ENCODE measurements at regions of chr20 and their contacts with region 1.

Region 1: GRCh38 chr20:54649511-54649962 is 174.1 kb downstream of the DOK5 start:
- DNase-seq: peak; percentile 74 to 82 (median 75)
- ATAC-seq: peak; percentile 89 to 93 (median 91)
- H3K4me3 ChIP-seq: no peak overlapping the region
- H3K27ac ChIP-seq: no peak overlapping the region
- H3K4me1 ChIP-seq: peaks cover 0 to 10% (median 4%) of the 10 kb centered on the region in 4 donors
- H3K27me3 ChIP-seq: no peaks in the 10 kb centered on the region
- CTCF ChIP-seq: peak; percentile 55 to 87 (median 83)
- POLR2A ChIP-seq: no peak

Region 2: GRCh38 chr20:54212226-54212625 is 437.3 kb before region 1 on chr20:
- intact Hi-C with region 1: loop called in 1 of 2 experiments (anchors 5 kb)
- DNase-seq: no peak
- ATAC-seq: no peak
- H3K4me3 ChIP-seq: no peak overlapping the region
- H3K27ac ChIP-seq: no peak overlapping the region
- H3K4me1 ChIP-seq: peaks cover 0 to 14% (median 5%) of the 10 kb centered on the region in 4 donors
- H3K27me3 ChIP-seq: no peaks in the 10 kb centered on the region
- CTCF ChIP-seq: no peak
- POLR2A ChIP-seq: no peak

Region 3: GRCh38 chr20:54219751-54220426 is 429.6 kb before region 1 on chr20:
- intact Hi-C with region 1: loop called in 1 of 2 experiments (anchors 10 kb)
- DNase-seq: no peak
- ATAC-seq: peak in 2 of 4 donors; percentile 32 to 46
- H3K4me3 ChIP-seq: no peak overlapping the region
- H3K27ac ChIP-seq: no peak overlapping the region
- H3K4me1 ChIP-seq: peaks cover 0 to 22% (median 8%) of the 10 kb centered on the region in 4 donors
- H3K27me3 ChIP-seq: no peaks in the 10 kb centered on the region
- CTCF ChIP-seq: peak; percentile 51 to 66 (median 58)
- POLR2A ChIP-seq: no peak

Region 4: DNA sequence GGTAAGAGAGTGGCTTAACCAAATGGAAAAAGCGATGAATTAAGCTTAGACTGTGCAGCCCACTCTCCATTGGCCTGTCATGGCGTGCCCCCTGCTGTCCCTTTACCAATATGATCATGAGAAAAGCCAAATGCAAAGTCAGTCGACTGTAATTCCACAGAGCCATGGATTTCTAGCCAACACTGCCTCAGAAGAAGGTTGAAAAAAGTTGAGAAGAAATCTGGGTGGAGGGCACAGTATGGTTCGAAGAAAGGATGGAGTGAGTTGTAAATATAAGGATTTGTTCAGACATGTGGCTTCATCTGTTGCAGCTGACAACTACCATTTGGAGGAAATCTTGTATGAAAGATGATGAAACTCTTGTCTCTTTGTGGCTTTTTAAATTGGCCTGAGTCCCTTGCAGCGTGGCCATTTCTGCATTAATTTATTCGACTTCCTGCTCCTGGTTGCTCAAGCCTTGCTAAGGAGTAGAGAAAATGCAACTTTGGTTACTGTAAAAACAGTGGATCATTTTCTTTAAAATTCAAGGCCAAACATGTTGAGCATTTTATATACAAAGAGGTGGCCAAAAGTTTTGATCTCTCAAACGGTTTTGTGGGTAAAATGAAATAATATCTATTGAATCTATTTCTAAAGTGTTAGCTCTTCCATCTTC is 77.4 kb after region 1 on chr20:
- intact Hi-C with region 1: no loop called
- DNase-seq: no peak
- ATAC-seq: no peak
- H3K4me3 ChIP-seq: no peak overlapping the region
- H3K27ac ChIP-seq: no peak overlapping the region
- H3K4me1 ChIP-seq: no peaks in the 10 kb centered on the region
- H3K27me3 ChIP-seq: no peaks in the 10 kb centered on the region
- CTCF ChIP-seq: no peak
- POLR2A ChIP-seq: no peak

Measured in right lobe of liver (tissue), 6 donors.